Panc1 (cell line): ENCODE measurements at regions of chr6 and their contacts with region 1.

Region 1: DNA sequence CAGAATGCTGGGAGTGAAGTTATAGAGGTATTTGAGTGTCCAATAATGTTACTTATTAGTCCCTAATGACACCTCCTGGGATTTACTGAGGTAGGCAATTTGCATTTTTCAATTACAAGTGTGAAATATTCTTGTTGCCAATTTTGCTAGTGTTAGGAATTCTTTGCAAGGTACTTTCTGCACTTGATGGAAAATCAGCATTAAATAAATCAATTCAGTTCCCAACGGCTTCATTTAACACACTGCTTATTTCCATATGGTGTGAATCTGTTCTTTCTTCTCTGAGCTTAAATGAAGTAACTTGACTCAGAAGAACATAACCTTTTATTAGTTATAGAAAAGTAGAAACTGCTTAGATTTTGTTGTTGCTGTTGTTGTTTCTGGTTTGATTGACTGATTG is 21.2 kb downstream of the CCN2 start:
- DNase-seq: no peak
- ATAC-seq: no peak
- H3K4me3 ChIP-seq: no peak overlapping the region
- H3K27ac ChIP-seq: no peak overlapping the region
- H3K4me1 ChIP-seq: no peaks in the 10 kb centered on the region; the same call in 1 of the 2 replicates
- H3K27me3 ChIP-seq: no peaks in the 10 kb centered on the region
- CTCF ChIP-seq: no peak

Region 2: DNA sequence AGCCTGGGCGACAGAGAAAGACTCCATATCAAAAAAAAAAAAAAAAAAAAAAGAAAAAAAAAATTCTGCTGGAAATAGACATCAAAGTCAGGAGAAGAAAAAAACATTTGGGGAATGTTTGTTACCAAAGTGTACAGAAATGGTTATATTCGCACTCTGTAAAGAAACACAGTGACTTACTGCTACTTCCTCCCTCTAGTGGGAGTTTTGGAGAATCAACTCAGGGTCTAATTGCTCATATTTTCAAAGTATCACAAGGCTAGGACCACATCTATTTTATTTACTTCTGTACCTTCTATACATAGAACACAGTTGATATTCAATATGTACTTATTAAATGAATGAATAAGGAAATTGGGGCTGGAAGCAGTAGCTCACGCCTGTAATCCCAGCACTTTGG is 332.5 kb before region 1 on chr6:
- CTCF ChIA-PET with region 1: no interaction called
- POLR2A ChIA-PET with region 1: no interaction called
- in situ Hi-C with region 1: no loop called
- intact Hi-C with region 1: no loop called
- DNase-seq: no peak
- ATAC-seq: no peak
- H3K4me3 ChIP-seq: no peak overlapping the region
- H3K27ac ChIP-seq: no peak overlapping the region
- H3K4me1 ChIP-seq: no peaks in the 10 kb centered on the region
- H3K27me3 ChIP-seq: no peaks in the 10 kb centered on the region
- CTCF ChIP-seq: peak; percentile 47

Region 3: DNA sequence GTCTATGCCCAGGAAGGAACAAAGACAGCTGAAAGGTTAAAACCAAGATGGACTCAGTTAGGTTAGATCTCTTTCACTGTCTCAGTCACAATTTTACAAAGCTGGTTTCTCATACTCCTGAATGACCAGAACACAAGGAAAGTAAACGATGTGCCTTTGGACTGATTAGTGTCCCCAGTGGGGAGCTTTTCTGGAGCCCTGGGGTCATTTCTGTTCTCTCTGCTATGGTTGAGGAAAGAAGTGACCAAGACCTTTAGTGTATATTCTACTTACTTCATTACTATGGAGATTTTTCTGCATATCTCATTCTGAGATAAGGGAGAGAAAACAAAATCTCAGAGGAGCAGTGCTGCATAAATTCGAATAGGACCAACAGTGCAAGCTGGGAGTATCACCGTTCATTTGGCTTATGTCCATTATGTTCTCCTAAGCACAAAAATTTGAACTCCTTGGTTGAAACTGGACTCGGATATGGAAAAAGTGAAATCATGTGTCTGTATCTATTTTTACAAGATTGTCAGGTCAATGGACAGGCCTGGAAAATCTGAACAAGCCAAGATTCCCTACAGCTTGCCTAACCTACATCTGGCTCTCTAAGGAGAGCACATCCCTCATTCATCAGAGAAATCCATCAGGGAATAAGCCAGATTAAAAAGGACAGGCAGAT is 156.6 kb before region 1 on chr6:
- CTCF ChIA-PET with region 1: no interaction called
- POLR2A ChIA-PET with region 1: no interaction called
- in situ Hi-C with region 1: no loop called
- intact Hi-C with region 1: no loop called
- DNase-seq: no peak
- ATAC-seq: no peak
- H3K4me3 ChIP-seq: no peak overlapping the region
- H3K27ac ChIP-seq: no peak overlapping the region
- H3K4me1 ChIP-seq: no peaks in the 10 kb centered on the region
- H3K27me3 ChIP-seq: no peaks in the 10 kb centered on the region
- CTCF ChIP-seq: no peak

Region 4: DNA sequence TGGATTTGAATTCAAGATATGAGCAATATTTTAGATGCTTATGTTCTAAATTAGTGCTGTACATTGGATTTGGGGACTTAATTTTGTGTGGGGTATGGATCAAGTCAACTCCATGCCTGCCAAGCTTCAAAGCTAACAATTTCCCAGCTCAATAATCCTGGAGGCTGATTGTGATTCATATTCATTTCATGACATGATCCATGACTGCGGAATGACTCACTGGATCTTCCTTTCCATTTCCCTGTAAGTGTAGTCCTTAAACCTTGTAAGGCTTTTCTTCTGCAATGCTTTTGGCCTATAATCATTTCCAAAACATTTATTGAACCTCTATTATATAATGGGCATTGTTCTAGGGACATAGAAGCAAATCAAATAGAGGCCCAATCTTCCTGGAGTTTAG is 65.9 kb after region 1 on chr6:
- CTCF ChIA-PET with region 1: no interaction called
- POLR2A ChIA-PET with region 1: interaction called, 11 read pairs
- in situ Hi-C with region 1: no loop called
- intact Hi-C with region 1: no loop called
- DNase-seq: peak; percentile 81
- ATAC-seq: peak; percentile 65
- H3K4me3 ChIP-seq: no peak overlapping the region
- H3K27ac ChIP-seq: no peak overlapping the region
- H3K4me1 ChIP-seq: no peaks in the 10 kb centered on the region
- H3K27me3 ChIP-seq: no peaks in the 10 kb centered on the region
- CTCF ChIP-seq: no peak

Region 5: GRCh38 chr6:132084833-132085509 is 155.0 kb after region 1 on chr6:
- CTCF ChIA-PET with region 1: no interaction called
- POLR2A ChIA-PET with region 1: no interaction called
- in situ Hi-C with region 1: no loop called
- intact Hi-C with region 1: no loop called
- DNase-seq: peak; percentile 50
- ATAC-seq: peak; percentile 86
- H3K4me3 ChIP-seq: peak overlapping the region; percentile 4 to 21
- H3K27ac ChIP-seq: peak overlapping the region; percentile 87
- H3K4me1 ChIP-seq: peaks cover 11% of the 10 kb centered on the region
- H3K27me3 ChIP-seq: no peaks in the 10 kb centered on the region
- CTCF ChIP-seq: no peak

Region 6: GRCh38 chr6:132096245-132096644 is 166.3 kb after region 1 on chr6:
- CTCF ChIA-PET with region 1: no interaction called
- POLR2A ChIA-PET with region 1: no interaction called
- in situ Hi-C with region 1: no loop called
- intact Hi-C with region 1: no loop called
- DNase-seq: no peak
- ATAC-seq: no peak
- H3K4me3 ChIP-seq: no peak overlapping the region
- H3K27ac ChIP-seq: no peak overlapping the region
- H3K4me1 ChIP-seq: no peaks in the 10 kb centered on the region
- H3K27me3 ChIP-seq: no peaks in the 10 kb centered on the region
- CTCF ChIP-seq: no peak